MCF 10A (cell line): ENCODE measurements at regions of chr2 and their contacts with region 1.

Region 1: DNA sequence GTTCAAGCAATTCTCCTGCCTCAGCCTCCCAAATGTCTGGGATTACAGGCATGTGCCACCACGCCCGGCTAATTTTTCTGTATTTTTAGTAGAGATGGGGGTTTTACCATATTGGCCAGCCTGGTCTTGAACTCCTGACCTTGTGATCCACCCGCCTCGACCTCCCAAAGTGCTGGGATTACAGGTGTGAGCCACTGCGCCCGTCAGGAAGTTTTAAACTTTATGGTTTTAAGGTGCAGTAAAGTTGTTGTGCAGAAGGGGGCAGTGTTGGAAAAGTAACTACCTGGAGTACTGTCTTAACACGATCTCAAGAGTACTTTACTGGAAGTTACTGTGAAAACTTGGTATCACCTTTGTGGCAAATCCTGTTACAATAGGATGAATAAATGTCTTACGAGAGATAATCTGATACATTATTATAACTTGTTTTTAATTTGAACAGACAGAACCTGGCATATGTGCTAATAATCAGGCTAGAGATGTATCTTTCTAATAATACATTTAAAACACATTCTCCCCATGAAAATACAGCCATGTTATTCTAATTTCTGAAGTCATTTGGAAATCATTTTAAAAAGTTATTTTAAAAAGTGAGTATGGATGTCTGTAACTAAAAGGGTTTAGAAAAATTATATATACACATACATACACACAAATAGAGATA is 10.8 kb downstream of the SPDYA start:
- DNase-seq: peak; percentile 70
- H3K4me3 Mint-ChIP-seq: no peak overlapping the region
- H3K27ac Mint-ChIP-seq: no peak overlapping the region
- H3K4me1 Mint-ChIP-seq: no peaks in the 10 kb centered on the region
- H3K27me3 Mint-ChIP-seq: no peaks in the 10 kb centered on the region
- CTCF ChIP-seq: peak; percentile 59

Region 2: GRCh38 chr2:28780496-28780895 is 40.9 kb before region 1 on chr2:
- CTCF ChIA-PET with region 1: no interaction called
- POLR2A ChIA-PET with region 1: no interaction called
- intact Hi-C with region 1: no loop called
- DNase-seq: no peak
- H3K4me3 Mint-ChIP-seq: no peak overlapping the region
- H3K27ac Mint-ChIP-seq: no peak overlapping the region
- H3K4me1 Mint-ChIP-seq: peaks cover 10% of the 10 kb centered on the region
- H3K27me3 Mint-ChIP-seq: no peaks in the 10 kb centered on the region
- CTCF ChIP-seq: no peak

Region 3: GRCh38 chr2:28927878-28928277 is 106.5 kb after region 1 on chr2:
- CTCF ChIA-PET with region 1: interaction called, 5 read pairs
- POLR2A ChIA-PET with region 1: no interaction called
- intact Hi-C with region 1: loop called (anchors 5 kb)
- DNase-seq: no peak
- H3K4me3 Mint-ChIP-seq: no peak overlapping the region
- H3K27ac Mint-ChIP-seq: peak overlapping the region; percentile 80
- H3K4me1 Mint-ChIP-seq: peaks cover 21% of the 10 kb centered on the region
- H3K27me3 Mint-ChIP-seq: no peaks in the 10 kb centered on the region
- CTCF ChIP-seq: no peak

Region 4: DNA sequence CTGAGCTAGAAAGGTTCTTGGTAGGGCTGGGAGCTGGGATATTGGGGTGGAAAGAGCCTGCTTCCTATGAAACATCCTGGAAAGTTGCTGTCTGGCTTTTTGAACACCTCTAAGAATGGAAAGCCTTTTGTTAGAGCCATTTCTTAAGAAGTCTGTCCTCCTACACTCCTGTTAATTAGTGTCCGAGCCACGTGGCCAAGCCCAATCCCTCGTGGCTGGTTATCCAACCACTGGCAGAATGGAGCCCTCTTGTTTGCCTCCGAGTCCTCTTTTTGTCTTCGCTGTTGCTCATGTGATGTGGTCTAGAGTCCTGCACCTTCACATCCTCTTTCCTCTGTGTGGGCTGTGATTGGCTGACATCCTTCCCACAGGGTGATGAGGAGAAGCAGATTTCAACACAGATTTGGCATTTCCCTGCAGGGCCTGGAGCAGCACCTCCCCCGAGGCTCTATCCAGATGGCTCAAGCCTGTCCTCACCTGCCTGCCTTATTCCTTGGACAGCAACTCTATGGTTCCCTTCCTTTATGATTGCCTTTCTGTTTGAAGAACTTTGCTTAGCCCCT is 151.4 kb after region 1 on chr2:
- CTCF ChIA-PET with region 1: no interaction called
- POLR2A ChIA-PET with region 1: no interaction called
- intact Hi-C with region 1: no loop called
- DNase-seq: no peak
- H3K4me3 Mint-ChIP-seq: no peak overlapping the region
- H3K27ac Mint-ChIP-seq: no peak overlapping the region
- H3K4me1 Mint-ChIP-seq: peaks cover 7% of the 10 kb centered on the region
- H3K27me3 Mint-ChIP-seq: no peaks in the 10 kb centered on the region
- CTCF ChIP-seq: no peak

Region 5: GRCh38 chr2:29196792-29197788 is 375.7 kb after region 1 on chr2:
- CTCF ChIA-PET with region 1: interaction called, 3 read pairs
- POLR2A ChIA-PET with region 1: no interaction called
- intact Hi-C with region 1: loop called (anchors 2 kb)
- DNase-seq: peak; percentile 77
- H3K4me3 Mint-ChIP-seq: no peak overlapping the region
- H3K27ac Mint-ChIP-seq: no peak overlapping the region
- H3K4me1 Mint-ChIP-seq: peaks cover 11% of the 10 kb centered on the region
- H3K27me3 Mint-ChIP-seq: no peaks in the 10 kb centered on the region
- CTCF ChIP-seq: peak; percentile 84